B cell (primary cell): ENCODE measurements at regions of chr10 and their contacts with region 1.

Region 1: GRCh38 chr10:91409869-91410637 is at the start of gene HECTD2:
- DNase-seq: peak; percentile 94
- ATAC-seq: peak; percentile 81
- H3K4me3 ChIP-seq: peak within 1 kb of the TSS; percentile 71 to 96 (median 78)
- H3K4me3 Mint-ChIP-seq: peak within 1 kb of the TSS; percentile 84
- H3K27ac ChIP-seq: peak within 1 kb of the TSS; percentile 92 to 94
- H3K27ac Mint-ChIP-seq: peak within 1 kb of the TSS; percentile 88
- H3K4me1 ChIP-seq: peaks cover 8 to 13% of the 10 kb centered on the region in 2 donors
- H3K4me1 Mint-ChIP-seq: peaks cover 14% of the 10 kb centered on the region
- H3K27me3 ChIP-seq: no peaks in the 10 kb centered on the region
- H3K27me3 Mint-ChIP-seq: no peaks in the 10 kb centered on the region
- CTCF ChIP-seq: peak; percentile 24
- total RNA-seq, gene HECTD2: 7.9 and 10.7 TPM in 2 replicates

Region 2: GRCh38 chr10:90871766-90872647 is 538.0 kb before region 1 on chr10 and contains the start of gene RPP30:
- CTCF ChIA-PET with region 1: no interaction called
- POLR2A ChIA-PET with region 1: no interaction called
- intact Hi-C with region 1: loop called (anchors 5 kb)
- DNase-seq: peak; percentile 86
- ATAC-seq: peak; percentile 97
- H3K4me3 ChIP-seq: peak within 1 kb of the TSS; percentile 72 to 96 (median 92)
- H3K4me3 Mint-ChIP-seq: peak within 1 kb of the TSS; percentile 92
- H3K27ac ChIP-seq: peak within 1 kb of the TSS; percentile 51 to 62
- H3K27ac Mint-ChIP-seq: peak within 1 kb of the TSS; percentile 84
- H3K4me1 ChIP-seq: peaks cover 16 to 18% of the 10 kb centered on the region in 2 donors
- H3K4me1 Mint-ChIP-seq: peaks cover 32% of the 10 kb centered on the region
- H3K27me3 ChIP-seq: peaks cover 0 to 13% (median 7%) of the 10 kb centered on the region in 4 experiments
- H3K27me3 Mint-ChIP-seq: peaks cover 27% of the 10 kb centered on the region
- CTCF ChIP-seq: no peak
- total RNA-seq, gene RPP30: 41.7 and 42.3 TPM in 2 replicates

Region 3: DNA sequence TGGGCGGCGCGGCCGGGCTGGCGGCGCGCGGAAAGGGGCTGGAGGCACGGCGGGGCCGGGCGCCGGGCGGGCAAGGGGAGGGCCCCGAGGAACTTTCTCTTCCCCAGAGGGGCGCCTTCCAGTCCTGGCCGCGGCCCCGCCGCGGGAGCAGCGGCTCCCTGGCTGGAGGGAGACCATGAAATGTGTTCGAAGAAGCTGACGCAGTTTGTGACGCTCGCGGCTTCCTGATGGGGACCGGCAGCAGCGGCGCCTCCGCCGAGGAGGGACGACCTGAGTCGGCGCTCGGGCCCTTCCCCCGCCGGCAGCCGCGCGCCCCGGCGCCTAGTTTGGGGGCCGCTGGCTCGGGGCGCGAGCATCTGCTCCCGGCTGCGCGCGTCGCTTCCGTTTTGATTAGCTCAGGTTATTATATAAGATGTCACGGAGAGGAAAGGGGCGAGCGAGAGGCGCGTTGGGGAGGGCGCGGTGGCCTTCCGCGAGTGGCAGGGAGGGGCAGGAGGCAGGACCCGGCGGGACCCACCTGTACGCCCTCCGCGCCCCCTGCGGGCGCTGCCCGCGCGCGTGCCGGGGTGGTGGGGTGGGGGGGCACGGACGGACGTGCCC is 246.7 kb before region 1 on chr10:
- CTCF ChIA-PET with region 1: no interaction called
- POLR2A ChIA-PET with region 1: no interaction called
- intact Hi-C with region 1: loop called (anchors 2 kb)
- DNase-seq: peak; percentile 92
- ATAC-seq: peak; percentile 48
- H3K4me3 ChIP-seq: peak overlapping the region; percentile 34 to 84 (median 71)
- H3K4me3 Mint-ChIP-seq: peak overlapping the region; percentile 94
- H3K27ac ChIP-seq: peak overlapping the region; percentile 85 to 90
- H3K27ac Mint-ChIP-seq: peak overlapping the region; percentile 97
- H3K4me1 ChIP-seq: peaks cover 14 to 15% of the 10 kb centered on the region in 2 donors
- H3K4me1 Mint-ChIP-seq: peaks cover 49% of the 10 kb centered on the region
- H3K27me3 ChIP-seq: no peaks in the 10 kb centered on the region
- H3K27me3 Mint-ChIP-seq: no peaks in the 10 kb centered on the region
- CTCF ChIP-seq: peak; percentile 34

Region 4: GRCh38 chr10:91389636-91390512 is 20.2 kb before region 1 on chr10:
- CTCF ChIA-PET with region 1: interaction called, 9 read pairs
- POLR2A ChIA-PET with region 1: no interaction called
- intact Hi-C with region 1: loop called (anchors 1 kb)
- DNase-seq: peak; percentile 78
- ATAC-seq: peak; percentile 85
- H3K4me3 ChIP-seq: no peak overlapping the region
- H3K4me3 Mint-ChIP-seq: no peak overlapping the region
- H3K27ac ChIP-seq: no peak overlapping the region
- H3K27ac Mint-ChIP-seq: no peak overlapping the region
- H3K4me1 ChIP-seq: no peaks in the 10 kb centered on the region
- H3K4me1 Mint-ChIP-seq: peaks cover 3% of the 10 kb centered on the region
- H3K27me3 ChIP-seq: peaks cover 0 to 3% (median 0%) of the 10 kb centered on the region in 4 experiments
- H3K27me3 Mint-ChIP-seq: peaks cover 33% of the 10 kb centered on the region
- CTCF ChIP-seq: peak; percentile 84

Region 5: GRCh38 chr10:91653219-91653870 is 243.3 kb after region 1 on chr10:
- CTCF ChIA-PET with region 1: no interaction called
- POLR2A ChIA-PET with region 1: no interaction called
- intact Hi-C with region 1: no loop called
- DNase-seq: no peak
- ATAC-seq: no peak
- H3K4me3 ChIP-seq: no peak overlapping the region
- H3K4me3 Mint-ChIP-seq: no peak overlapping the region
- H3K27ac ChIP-seq: no peak overlapping the region
- H3K27ac Mint-ChIP-seq: no peak overlapping the region
- H3K4me1 ChIP-seq: no peaks in the 10 kb centered on the region
- H3K4me1 Mint-ChIP-seq: no peaks in the 10 kb centered on the region
- H3K27me3 ChIP-seq: no peaks in the 10 kb centered on the region
- H3K27me3 Mint-ChIP-seq: peaks cover 2% of the 10 kb centered on the region
- CTCF ChIP-seq: no peak

Region 6: DNA sequence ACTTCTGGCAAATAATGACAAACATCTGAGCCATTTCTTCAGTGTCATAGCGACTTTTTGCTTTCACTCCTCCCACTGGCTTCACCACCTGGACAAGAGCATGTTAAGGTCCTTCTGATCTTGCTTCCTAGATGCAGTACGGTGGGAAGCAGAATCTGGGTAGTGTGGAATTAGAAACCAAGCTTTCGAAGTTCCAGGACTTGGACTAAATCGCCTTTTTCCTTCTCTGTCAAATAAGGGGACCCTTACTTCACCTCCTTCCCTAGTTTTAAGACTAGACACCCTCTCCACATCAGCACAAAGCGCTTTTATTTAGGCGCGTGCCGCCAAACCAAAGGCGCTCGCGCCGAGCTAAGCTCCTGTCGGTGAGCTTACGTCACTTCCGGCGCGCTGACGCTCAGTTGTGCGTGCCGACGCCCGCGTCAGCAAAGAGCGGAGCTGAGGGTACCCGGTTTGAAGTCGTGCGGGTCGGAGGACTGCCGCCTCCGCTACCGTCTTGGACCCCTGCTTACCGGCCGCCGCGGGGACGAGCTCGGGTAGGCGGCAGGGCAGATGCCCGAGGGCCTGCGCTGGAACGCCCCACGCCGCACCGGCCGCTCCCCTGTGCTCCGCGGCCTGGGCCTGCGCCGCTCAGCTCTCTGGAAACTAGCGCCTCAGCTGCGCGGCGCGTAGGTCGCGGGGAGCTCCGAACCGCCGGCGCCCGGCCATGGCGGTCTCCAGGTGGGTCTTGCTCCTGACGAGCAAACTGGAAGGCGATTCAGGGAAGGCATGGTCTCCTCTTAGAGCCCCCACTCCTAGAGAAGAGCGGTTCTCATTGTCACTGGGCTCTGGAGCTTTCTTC is 513.5 kb after region 1 on chr10 and contains the start of gene BTAF1:
- CTCF ChIA-PET with region 1: no interaction called
- POLR2A ChIA-PET with region 1: no interaction called
- intact Hi-C with region 1: loop called (anchors 5 kb)
- DNase-seq: peak; percentile 96
- ATAC-seq: peak; percentile 93
- H3K4me3 ChIP-seq: peak within 1 kb of the TSS; percentile 88 to 98 (median 93)
- H3K4me3 Mint-ChIP-seq: peak within 1 kb of the TSS; percentile 86
- H3K27ac ChIP-seq: peak within 1 kb of the TSS; percentile 93 to 99
- H3K27ac Mint-ChIP-seq: peak within 1 kb of the TSS; percentile 100
- H3K4me1 ChIP-seq: peaks cover 18 to 20% of the 10 kb centered on the region in 2 donors
- H3K4me1 Mint-ChIP-seq: peaks cover 39% of the 10 kb centered on the region
- H3K27me3 ChIP-seq: peaks cover 0 to 4% (median 2%) of the 10 kb centered on the region in 4 experiments
- H3K27me3 Mint-ChIP-seq: peaks cover 3% of the 10 kb centered on the region
- CTCF ChIP-seq: no peak
- total RNA-seq, gene BTAF1: 78.1 and 81.7 TPM in 2 replicates